Gastrocnemius medialis (tissue), 4 donors: ENCODE measurements at regions of chr1 and their contacts with region 1.

Region 1: GRCh38 chr1:8423650-8424538 is 106.0 kb downstream of the SLC45A1 start:
- DNase-seq: peak in 1 of 2 donors; percentile 59
- ATAC-seq: peak; percentile 2 to 18
- H3K4me3 ChIP-seq: peak overlapping the region; percentile 77 to 95 (median 92)
- H3K27ac ChIP-seq: peak overlapping the region; percentile 91 to 100 (median 96)
- H3K4me1 ChIP-seq: peaks cover 52 to 65% of the 10 kb centered on the region in 2 donors
- H3K27me3 ChIP-seq: no peaks in the 10 kb centered on the region
- CTCF ChIP-seq: peak in 2 of 5 experiments; percentile 19 to 27
- POLR2A ChIP-seq: no peak

Region 2: GRCh38 chr1:8026153-8026975 is 397.5 kb before region 1 on chr1 and contains the start of gene ERRFI1:
- in situ Hi-C with region 1: no loop called
- intact Hi-C with region 1: no loop called
- DNase-seq: peak; percentile 89 to 95
- ATAC-seq: peak; percentile 81 to 84
- H3K4me3 ChIP-seq: peak within 1 kb of the TSS; percentile 77 to 96 (median 83)
- H3K27ac ChIP-seq: peak within 1 kb of the TSS; percentile 87 to 98 (median 94)
- H3K4me1 ChIP-seq: peaks cover 41 to 49% of the 10 kb centered on the region in 2 donors
- H3K27me3 ChIP-seq: no peaks in the 10 kb centered on the region
- CTCF ChIP-seq: peak in 3 of 5 experiments; percentile 5 to 17 (median 9)
- POLR2A ChIP-seq: peak; percentile 99 to 100
- total RNA-seq, gene ERRFI1: 184 to 644 (median 448) TPM

Region 3: GRCh38 chr1:8374812-8375211 is 49.1 kb before region 1 on chr1:
- in situ Hi-C with region 1: loop called in 1 of 4 experiments (anchors 5 kb)
- intact Hi-C with region 1: loop called (anchors 2 kb)
- DNase-seq: peak in 1 of 2 donors; percentile 72
- ATAC-seq: no peak
- H3K4me3 ChIP-seq: no peak overlapping the region
- H3K27ac ChIP-seq: peak overlapping the region; percentile 90 to 95 (median 93)
- H3K4me1 ChIP-seq: peaks cover 98 to 99% of the 10 kb centered on the region in 2 donors
- H3K27me3 ChIP-seq: no peaks in the 10 kb centered on the region
- CTCF ChIP-seq: peak; percentile 30 to 58 (median 43)
- POLR2A ChIP-seq: no peak

Region 4: DNA sequence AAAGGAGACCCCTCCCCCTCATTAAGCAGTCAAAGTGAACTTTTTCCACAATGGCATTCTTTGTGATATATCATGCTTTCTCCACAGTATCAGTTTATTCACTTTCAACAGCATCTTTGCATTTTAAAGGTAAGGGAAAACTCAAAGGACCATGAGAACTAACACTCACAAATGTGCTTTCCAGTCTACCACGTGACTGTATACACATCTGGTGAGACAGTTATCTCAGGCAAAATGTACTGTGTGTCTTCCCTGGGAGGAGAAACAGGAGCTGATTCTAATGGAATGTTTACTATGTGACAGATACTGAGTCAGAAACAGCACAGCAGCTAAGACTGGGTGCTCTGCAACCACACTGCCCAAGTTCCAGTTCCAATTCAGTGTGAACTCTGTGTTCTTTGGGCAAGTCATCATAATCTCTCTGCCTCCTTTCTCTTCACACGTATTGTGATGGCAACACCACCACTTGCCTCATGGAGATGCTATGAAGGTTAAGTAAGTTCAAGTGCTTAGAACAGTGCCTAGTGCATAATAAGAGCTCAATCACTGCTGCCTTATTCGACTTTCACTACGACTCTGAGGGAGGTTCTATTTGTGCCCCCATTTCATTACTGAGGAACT is 27.0 kb before region 1 on chr1:
- in situ Hi-C with region 1: no loop called
- intact Hi-C with region 1: loop called (anchors 2 kb)
- DNase-seq: peak; percentile 87 to 88
- ATAC-seq: peak; percentile 92 to 94
- H3K4me3 ChIP-seq: peak overlapping the region in 3 of 4 donors; percentile 5 to 22 (median 7)
- H3K27ac ChIP-seq: peak overlapping the region; percentile 86 to 92 (median 88)
- H3K4me1 ChIP-seq: peaks cover 87 to 96% of the 10 kb centered on the region in 2 donors
- H3K27me3 ChIP-seq: no peaks in the 10 kb centered on the region
- CTCF ChIP-seq: no peak
- POLR2A ChIP-seq: peak in 1 of 2 donors; percentile 58

Region 5: GRCh38 chr1:8560611-8561544 is 137.0 kb after region 1 on chr1:
- in situ Hi-C with region 1: no loop called
- intact Hi-C with region 1: no loop called
- DNase-seq: no peak
- ATAC-seq: peak; percentile 76 to 84
- H3K4me3 ChIP-seq: no peak overlapping the region
- H3K27ac ChIP-seq: peak overlapping the region in 1 of 4 donors; percentile 8
- H3K4me1 ChIP-seq: peaks cover 4 to 20% of the 10 kb centered on the region in 2 donors
- H3K27me3 ChIP-seq: no peaks in the 10 kb centered on the region
- CTCF ChIP-seq: peak; percentile 89 to 98 (median 91)
- POLR2A ChIP-seq: no peak

Region 6: GRCh38 chr1:9128520-9129265 is 704.8 kb after region 1 on chr1 and contains the start of gene GPR157:
- in situ Hi-C with region 1: no loop called
- intact Hi-C with region 1: loop called (anchors 5 kb)
- DNase-seq: peak; percentile 86 to 87
- ATAC-seq: peak; percentile 53 to 65
- H3K4me3 ChIP-seq: peak within 1 kb of the TSS; percentile 72 to 97 (median 82)
- H3K27ac ChIP-seq: peak within 1 kb of the TSS; percentile 94 to 99 (median 98)
- H3K4me1 ChIP-seq: peaks cover 26 to 39% of the 10 kb centered on the region in 2 donors
- H3K27me3 ChIP-seq: no peaks in the 10 kb centered on the region
- CTCF ChIP-seq: peak in 4 of 5 experiments; percentile 22 to 43 (median 37)
- POLR2A ChIP-seq: peak; percentile 96 to 97
- total RNA-seq, gene GPR157: 12.9 to 38.1 (median 18.9) TPM

Region 7: DNA sequence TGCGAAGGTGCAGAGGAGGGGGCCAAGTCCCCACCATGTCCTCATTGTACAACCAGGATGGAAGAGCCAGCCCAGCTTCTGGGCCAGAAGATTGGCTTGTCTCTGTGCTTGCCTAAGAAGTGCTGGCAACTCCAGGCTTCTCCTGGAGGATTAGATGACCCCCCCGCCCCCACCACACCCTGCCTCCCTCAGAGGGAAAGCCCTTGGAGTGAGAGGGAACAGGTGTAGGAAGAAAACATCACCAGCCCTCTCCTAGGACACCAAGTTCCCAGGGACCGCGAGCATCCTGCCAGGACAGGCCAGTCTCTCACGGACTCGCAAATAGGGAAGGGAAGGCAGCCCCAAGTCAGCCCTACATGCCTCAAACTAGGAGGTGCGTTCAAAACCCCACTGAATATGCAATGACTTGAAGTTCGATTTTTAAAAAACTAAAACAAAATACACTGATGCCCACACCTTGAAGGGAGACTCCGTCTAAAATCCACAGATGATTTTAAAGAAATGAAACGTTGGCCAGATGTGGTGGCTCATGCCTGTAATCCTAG is 1094.6 kb after region 1 on chr1:
- in situ Hi-C with region 1: no loop called
- intact Hi-C with region 1: loop called (anchors 10 kb)
- DNase-seq: peak; percentile 96 to 99
- ATAC-seq: peak; percentile 81 to 83
- H3K4me3 ChIP-seq: peak overlapping the region in 1 of 4 donors; percentile 14
- H3K27ac ChIP-seq: peak overlapping the region; percentile 89 to 99 (median 94)
- H3K4me1 ChIP-seq: peaks cover 17 to 21% of the 10 kb centered on the region in 2 donors
- H3K27me3 ChIP-seq: no peaks in the 10 kb centered on the region
- CTCF ChIP-seq: no peak
- POLR2A ChIP-seq: peak; percentile 56 to 73